Sciatic nerve (tissue), 2 donors: ENCODE measurements at regions of chr1 and their contacts with region 1.

Region 1: GRCh38 chr1:55277377-55278130 is 62.4 kb upstream of the USP24 start:
- DNase-seq: peak; percentile 92
- ATAC-seq: peak; percentile 89

Region 2: GRCh38 chr1:55131801-55132200 is 145.8 kb before region 1 on chr1:
- intact Hi-C with region 1: loop called (anchors 10 kb)
- DNase-seq: no peak
- ATAC-seq: no peak

Region 3: DNA sequence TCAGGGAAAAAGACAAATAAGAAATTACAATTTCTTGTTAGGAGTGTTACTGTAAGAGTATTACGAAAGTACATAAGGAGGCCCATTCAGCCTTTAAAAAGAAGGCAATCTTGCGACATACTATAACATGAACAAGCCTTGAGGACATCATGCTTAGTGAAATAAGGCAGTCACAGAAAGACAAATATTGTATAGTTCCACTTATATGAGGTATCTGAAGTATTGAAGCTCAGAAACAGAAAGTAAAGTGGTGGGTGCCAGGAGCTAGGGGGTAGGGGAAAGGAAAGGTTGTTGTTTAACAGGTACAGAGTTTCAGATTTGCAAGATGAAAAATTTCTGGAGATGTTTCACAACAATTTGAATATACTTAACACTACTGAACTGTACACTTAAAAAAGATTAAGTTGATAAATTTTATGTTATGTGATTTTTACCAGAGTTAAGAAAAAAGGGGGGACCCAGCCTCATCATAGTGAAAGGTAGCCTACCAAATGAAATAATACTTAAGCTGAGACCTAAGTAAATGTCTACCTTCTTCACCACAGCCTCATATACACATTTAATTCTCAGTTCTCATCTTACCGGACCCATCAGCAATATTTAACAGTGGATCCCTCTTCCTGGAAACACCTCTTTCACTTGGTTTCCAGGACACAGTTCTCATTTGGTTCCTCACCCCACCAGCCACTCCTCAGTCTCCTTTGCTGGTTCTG is 81.9 kb before region 1 on chr1:
- intact Hi-C with region 1: no loop called
- DNase-seq: no peak
- ATAC-seq: no peak

Region 4: GRCh38 chr1:55230659-55231058 is 46.9 kb before region 1 on chr1:
- intact Hi-C with region 1: no loop called
- DNase-seq: no peak
- ATAC-seq: no peak

Region 5: GRCh38 chr1:55329091-55329490 is 51.5 kb after region 1 on chr1:
- intact Hi-C with region 1: no loop called
- DNase-seq: no peak
- ATAC-seq: peak; percentile 68

Region 6: DNA sequence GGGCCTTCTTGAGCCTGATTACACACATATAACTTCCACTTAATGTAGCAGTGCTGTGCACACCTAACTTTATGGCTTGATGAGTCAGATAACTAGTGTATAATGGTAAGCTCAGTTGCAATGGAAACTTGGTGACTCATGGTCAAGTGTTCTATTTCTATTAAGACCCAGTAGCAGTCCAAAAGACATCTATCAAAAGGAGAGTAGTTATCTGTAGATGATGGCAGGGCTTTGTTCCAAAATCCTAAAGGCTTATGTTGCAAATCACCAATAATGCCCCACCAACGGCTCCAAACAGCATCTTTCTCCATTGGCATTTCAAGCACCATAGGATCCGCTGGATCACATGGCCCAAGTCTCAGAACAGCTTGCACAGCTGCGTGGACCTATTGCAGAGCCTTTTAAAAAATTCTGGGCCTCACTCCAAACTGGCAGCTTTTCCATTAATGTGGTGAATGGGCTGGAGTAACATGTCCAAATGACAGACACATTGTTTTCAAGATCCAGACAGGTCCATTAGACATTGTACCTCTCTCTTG is 504.5 kb after region 1 on chr1:
- intact Hi-C with region 1: no loop called
- DNase-seq: no peak
- ATAC-seq: peak; percentile 49

Region 7: GRCh38 chr1:56590520-56591011 is 1313.0 kb after region 1 on chr1:
- intact Hi-C with region 1: loop called (anchors 5 kb)
- DNase-seq: no peak
- ATAC-seq: no peak